ENCODE measurements at regions of chr1 and their contacts with region 1.

Region 1: GRCh38 chr1:179882243-179883039 is at the start of gene TOR1AIP1:
- DNase-seq: peak; percentile 97
- H3K4me3 ChIP-seq: peak within 1 kb of the TSS; percentile 67 to 92 (median 78)
- H3K27ac ChIP-seq: peak within 1 kb of the TSS; percentile 95 to 99 (median 96)
- H3K4me1 ChIP-seq: peaks cover 16 to 56% (median 40%) of the 10 kb centered on the region in 4 donors
- H3K27me3 ChIP-seq: no peaks in the 10 kb centered on the region
- CTCF ChIP-seq: peak; percentile 57 to 92 (median 64)
- EP300 ChIP-seq: no peak
- POLR2A ChIP-seq: peak; percentile 97
- total RNA-seq, gene TOR1AIP1: 34.8 to 44.6 (median 41.2) TPM

Region 2: DNA sequence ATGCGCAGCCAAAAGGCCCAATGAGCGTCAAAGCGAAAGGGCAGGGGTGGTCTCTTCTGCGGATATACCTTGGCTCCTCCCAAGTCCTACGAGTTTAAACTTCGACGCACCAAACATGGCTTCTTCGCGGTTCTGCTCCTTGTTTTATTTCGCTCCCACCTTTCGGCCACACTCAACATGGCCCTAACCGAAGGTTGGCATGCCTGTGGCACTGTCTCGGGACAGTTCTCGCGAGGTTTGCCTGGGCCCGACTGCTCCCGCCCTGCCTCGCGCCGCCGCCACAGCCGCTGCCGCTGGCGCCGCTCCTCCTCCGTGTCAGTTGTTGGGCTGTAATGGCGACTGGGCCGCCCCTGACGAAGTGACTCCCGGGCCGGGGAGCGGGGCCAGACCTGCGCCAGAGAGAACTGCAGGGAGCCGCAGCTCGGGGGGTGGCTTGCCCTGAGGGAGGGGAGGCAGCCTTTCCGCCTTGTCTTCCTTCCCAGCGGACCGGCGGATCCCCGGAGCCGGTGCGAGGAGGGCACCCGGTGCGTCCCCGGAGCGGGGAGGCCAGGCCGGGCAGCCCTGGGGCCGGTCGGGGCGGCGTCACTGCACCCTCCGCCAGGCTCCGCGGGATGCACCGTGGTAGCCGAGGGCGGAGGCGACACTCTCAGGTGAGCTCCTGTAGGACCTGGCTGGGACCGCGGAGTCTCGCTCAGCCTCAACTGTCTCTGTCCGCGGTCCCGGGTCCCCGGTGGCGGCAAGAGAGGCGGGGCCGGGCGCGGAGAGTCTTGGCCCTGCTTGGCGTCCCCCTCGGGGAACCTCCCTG is 72.3 kb after region 1 on chr1 and contains the start of gene CEP350:
- in situ Hi-C with region 1: loop called in 1 of 4 experiments (anchors 10 kb)
- intact Hi-C with region 1: no loop called
- DNase-seq: peak; percentile 99
- H3K4me3 ChIP-seq: peak within 1 kb of the TSS; percentile 57 to 99 (median 81)
- H3K27ac ChIP-seq: peak within 1 kb of the TSS; percentile 89 to 99 (median 94)
- H3K4me1 ChIP-seq: peaks cover 17 to 33% (median 21%) of the 10 kb centered on the region in 4 donors
- H3K27me3 ChIP-seq: no peaks in the 10 kb centered on the region
- CTCF ChIP-seq: peak in 2 of 5 experiments; percentile 9 to 31
- EP300 ChIP-seq: no peak
- POLR2A ChIP-seq: peak; percentile 95
- total RNA-seq, gene CEP350: 40.0 to 60.3 (median 57.3) TPM

Region 3: DNA sequence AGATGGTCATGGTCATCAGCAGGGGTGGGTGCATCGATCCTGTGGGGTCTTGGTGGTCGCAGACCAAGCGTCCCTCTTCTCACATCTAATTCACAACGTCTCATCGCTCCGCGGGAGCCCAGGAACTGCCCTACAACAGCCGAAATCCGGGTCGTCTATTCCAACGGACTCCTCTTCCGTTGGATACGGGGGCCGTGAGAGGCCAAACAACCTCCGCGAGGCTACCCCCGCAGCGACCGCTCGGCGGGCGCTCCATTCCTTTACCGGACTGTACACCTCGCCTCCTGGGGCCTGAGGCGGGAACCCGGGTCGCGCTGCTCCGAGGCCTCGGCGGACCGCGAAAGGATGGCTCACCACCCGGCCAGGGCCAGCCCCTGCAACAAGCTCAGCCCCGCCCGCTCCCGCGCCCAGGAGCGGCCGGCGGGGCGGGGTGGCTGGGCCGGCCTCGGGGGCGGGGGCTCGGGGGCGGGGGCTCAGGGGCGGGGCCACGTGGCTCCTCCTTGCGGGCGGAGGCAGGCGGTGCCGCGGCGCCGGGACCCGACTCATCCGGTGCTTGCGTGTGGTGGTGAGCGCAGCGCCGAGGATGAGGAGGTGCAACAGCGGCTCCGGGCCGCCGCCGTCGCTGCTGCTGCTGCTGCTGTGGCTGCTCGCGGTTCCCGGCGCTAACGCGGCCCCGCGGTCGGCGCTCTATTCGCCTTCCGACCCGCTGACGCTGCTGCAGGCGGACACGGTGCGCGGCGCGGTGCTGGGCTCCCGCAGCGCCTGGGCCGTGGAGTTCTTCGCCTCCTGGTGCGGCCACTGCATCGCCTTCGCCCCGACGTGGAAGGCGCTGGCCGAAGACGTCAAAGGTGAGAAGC is 272.1 kb after region 1 on chr1 and contains the start of gene QSOX1:
- in situ Hi-C with region 1: loop called in 1 of 4 experiments (anchors 10 kb)
- intact Hi-C with region 1: no loop called
- DNase-seq: peak; percentile 92
- H3K4me3 ChIP-seq: peak within 1 kb of the TSS; percentile 73 to 98 (median 87)
- H3K27ac ChIP-seq: peak within 1 kb of the TSS; percentile 87 to 94 (median 92)
- H3K4me1 ChIP-seq: peaks cover 4 to 49% (median 38%) of the 10 kb centered on the region in 4 donors
- H3K27me3 ChIP-seq: no peaks in the 10 kb centered on the region
- CTCF ChIP-seq: peak in 1 of 5 experiments; percentile 33
- EP300 ChIP-seq: no peak
- POLR2A ChIP-seq: peak; percentile 91
- total RNA-seq, gene QSOX1: 109 to 124 (median 119) TPM

Region 4: DNA sequence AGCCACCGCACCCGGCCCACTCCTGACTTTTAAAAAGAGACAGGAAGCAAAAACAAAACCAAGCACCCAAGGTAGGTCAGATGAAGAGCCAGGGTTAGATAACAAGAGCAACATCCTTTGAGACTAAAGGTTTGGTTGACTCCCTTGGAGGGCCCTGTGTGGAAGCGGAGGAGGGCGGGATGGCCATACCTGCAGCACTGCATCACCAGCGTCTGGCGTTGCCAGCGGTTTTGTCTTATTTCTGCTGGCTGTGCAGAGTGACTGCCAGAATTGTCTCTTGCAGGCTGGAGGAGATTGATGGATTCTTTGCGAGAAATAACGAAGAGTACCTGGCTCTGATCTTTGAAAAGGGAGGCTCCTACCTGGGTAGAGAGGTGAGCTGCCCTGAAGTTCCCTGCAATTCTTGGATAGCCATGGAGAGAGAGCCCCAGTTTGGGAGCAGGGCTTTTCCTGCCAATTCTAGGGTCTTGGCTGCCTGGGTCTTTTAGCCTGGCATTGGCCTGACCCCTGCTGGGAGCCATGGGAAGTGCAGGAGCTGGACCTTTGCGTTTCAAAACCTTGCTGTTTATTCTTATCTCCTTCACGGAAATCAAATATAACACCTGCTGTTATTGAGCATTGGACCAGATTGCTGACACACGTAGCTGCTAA is 296.2 kb after region 1 on chr1:
- in situ Hi-C with region 1: loop called in 2 of 4 experiments (anchors 10 kb)
- intact Hi-C with region 1: no loop called
- DNase-seq: peak; percentile 68
- H3K4me3 ChIP-seq: no peak overlapping the region
- H3K27ac ChIP-seq: no peak overlapping the region
- H3K4me1 ChIP-seq: peaks cover 2 to 9% (median 6%) of the 10 kb centered on the region in 4 donors
- H3K27me3 ChIP-seq: no peaks in the 10 kb centered on the region
- CTCF ChIP-seq: peak; percentile 89 to 98 (median 96)
- EP300 ChIP-seq: no peak
- POLR2A ChIP-seq: no peak